ENCODE measurements at regions of chrX and their contacts with region 1.

Region 1: GRCh38 chrX:72276478-72276953 is 532 bp downstream of the RPS4X start:
- DNase-seq: peak in 1 of 5 donors; percentile 35
- H3K4me3 ChIP-seq: peak overlapping the region; percentile 70 to 82
- H3K4me3 Mint-ChIP-seq: peak overlapping the region; percentile 90 to 96 (median 94)
- H3K27ac ChIP-seq: peak overlapping the region; percentile 89
- H3K27ac Mint-ChIP-seq: peak overlapping the region; percentile 81 to 96 (median 87)
- H3K4me1 ChIP-seq: peaks cover 39% of the 10 kb centered on the region
- H3K4me1 Mint-ChIP-seq: peaks cover 23 to 44% (median 37%) of the 10 kb centered on the region in 4 donors
- H3K27me3 ChIP-seq: no peaks in the 10 kb centered on the region
- H3K27me3 Mint-ChIP-seq: no peaks in the 10 kb centered on the region

Region 2: DNA sequence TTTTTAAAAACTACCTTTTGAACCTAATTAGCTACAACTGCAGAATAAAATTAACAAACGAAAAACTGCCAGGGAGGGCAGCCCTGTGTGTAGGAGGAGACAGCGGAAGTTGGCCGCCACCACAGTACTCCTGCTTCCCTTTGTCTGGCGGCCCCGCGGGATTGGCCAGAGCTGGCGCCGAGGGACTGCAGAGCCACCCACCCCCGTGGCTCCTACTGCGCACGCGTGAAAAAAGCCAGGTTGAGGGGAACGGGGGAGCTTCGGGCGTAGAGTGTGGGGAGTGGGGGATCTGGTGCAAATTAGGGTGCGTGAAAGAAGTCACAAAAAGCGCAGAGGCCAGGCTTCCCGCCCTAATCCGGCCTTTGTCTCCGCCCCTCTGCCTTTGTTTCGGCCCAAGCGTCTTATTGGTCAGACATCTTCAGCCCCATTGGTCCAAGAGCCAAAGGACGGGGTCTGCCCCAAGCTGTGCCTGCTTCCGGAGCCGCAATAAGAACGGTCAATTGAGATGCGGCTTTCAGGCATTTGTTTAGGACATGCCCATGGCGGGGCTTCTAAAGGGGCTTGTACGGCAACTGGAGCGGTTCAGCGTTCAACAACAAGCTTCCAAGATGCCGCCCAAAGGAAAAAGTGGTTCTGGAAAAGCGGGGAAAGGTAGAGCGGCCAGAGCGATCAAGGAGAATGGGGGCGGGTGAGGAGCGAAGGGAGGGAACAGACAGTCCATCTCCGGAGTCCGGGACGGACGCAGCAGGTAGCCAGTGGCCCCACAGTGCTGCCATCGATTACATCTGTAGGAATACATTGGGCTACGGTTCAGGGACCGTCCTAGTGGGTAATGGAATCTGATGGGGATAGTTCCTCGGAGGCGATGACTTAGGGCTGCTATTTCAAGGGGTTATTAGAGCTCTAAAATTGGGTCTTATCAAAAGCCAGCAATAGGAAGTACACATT is 95.1 kb before region 1 on chrX and contains the start of gene PIN4:
- CTCF ChIA-PET with region 1: interaction called, 11 read pairs
- POLR2A ChIA-PET with region 1: interaction called, 28 read pairs
- intact Hi-C with region 1: loop called (anchors 2 kb)
- DNase-seq: peak; percentile 82 to 87 (median 84)
- H3K4me3 ChIP-seq: peak within 1 kb of the TSS; percentile 69
- H3K4me3 Mint-ChIP-seq: peak within 1 kb of the TSS in 1 of 8 donors; percentile 17
- H3K27ac ChIP-seq: peak within 1 kb of the TSS; percentile 68
- H3K27ac Mint-ChIP-seq: no peak within 1 kb of the TSS
- H3K4me1 ChIP-seq: peaks cover 24% of the 10 kb centered on the region
- H3K4me1 Mint-ChIP-seq: peaks cover 6 to 13% (median 8%) of the 10 kb centered on the region in 4 donors
- H3K27me3 ChIP-seq: no peaks in the 10 kb centered on the region
- H3K27me3 Mint-ChIP-seq: no peaks in the 10 kb centered on the region
- total RNA-seq, gene PIN4: 13.3 to 13.5 TPM

Region 3: GRCh38 chrX:72238721-72239475 is 37.6 kb before region 1 on chrX and contains the start of gene ERCC6L:
- CTCF ChIA-PET with region 1: interaction called, 48 read pairs
- POLR2A ChIA-PET with region 1: interaction called, 9 read pairs
- intact Hi-C with region 1: loop called (anchors 2 kb)
- DNase-seq: peak; percentile 80 to 85 (median 83)
- H3K4me3 ChIP-seq: peak within 1 kb of the TSS; percentile 46 to 52
- H3K4me3 Mint-ChIP-seq: peak within 1 kb of the TSS; percentile 67 to 84 (median 74)
- H3K27ac ChIP-seq: no peak within 1 kb of the TSS
- H3K27ac Mint-ChIP-seq: peak within 1 kb of the TSS; percentile 50 to 85 (median 60)
- H3K4me1 ChIP-seq: peaks cover 3% of the 10 kb centered on the region
- H3K4me1 Mint-ChIP-seq: peaks cover 0 to 7% (median 3%) of the 10 kb centered on the region in 4 donors
- H3K27me3 ChIP-seq: no peaks in the 10 kb centered on the region
- H3K27me3 Mint-ChIP-seq: no peaks in the 10 kb centered on the region
- total RNA-seq, gene ERCC6L: 0.15 to 0.28 TPM

Region 4: DNA sequence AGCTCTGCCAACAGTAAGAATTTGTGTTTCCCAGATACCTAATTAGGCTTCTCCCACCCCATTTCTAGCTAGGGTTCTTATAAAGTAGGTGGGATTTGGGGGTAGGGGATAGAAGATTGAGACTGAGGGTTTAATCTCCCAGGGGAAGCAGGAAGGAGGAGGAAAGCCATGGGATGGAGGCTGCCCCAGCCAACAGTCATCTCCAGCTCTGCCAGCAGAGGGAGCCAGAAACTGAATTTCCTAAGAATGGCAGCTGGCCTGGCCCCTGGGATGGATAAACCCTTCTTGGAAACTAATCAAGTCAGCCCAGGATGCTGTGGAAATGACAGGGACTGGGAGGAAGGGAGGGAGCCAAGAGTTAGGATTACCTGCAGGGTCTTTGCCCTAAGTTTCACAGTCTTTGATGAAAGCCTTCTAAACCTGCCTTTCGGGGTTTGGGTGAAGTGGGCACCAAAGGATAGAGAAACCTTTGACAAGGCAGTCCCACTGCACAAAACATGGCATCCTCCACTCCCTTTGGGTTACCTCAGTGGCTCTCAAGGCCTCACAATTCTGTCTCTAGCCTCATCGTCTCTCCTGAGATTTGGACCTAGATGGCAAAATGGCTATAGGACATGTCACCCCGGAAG is 30.9 kb before region 1 on chrX:
- CTCF ChIA-PET with region 1: interaction called, 48 read pairs
- POLR2A ChIA-PET with region 1: interaction called, 7 read pairs
- intact Hi-C with region 1: no loop called
- DNase-seq: peak in 4 of 5 donors; percentile 20 to 43 (median 28)
- H3K4me3 ChIP-seq: no peak overlapping the region
- H3K4me3 Mint-ChIP-seq: no peak overlapping the region
- H3K27ac ChIP-seq: no peak overlapping the region
- H3K27ac Mint-ChIP-seq: no peak overlapping the region
- H3K4me1 ChIP-seq: no peaks in the 10 kb centered on the region
- H3K4me1 Mint-ChIP-seq: no peaks in the 10 kb centered on the region
- H3K27me3 ChIP-seq: no peaks in the 10 kb centered on the region
- H3K27me3 Mint-ChIP-seq: no peaks in the 10 kb centered on the region

Region 5: GRCh38 chrX:72306851-72307645 is 30.5 kb after region 1 on chrX:
- CTCF ChIA-PET with region 1: no interaction called
- POLR2A ChIA-PET with region 1: interaction called, 8 read pairs
- intact Hi-C with region 1: loop called (anchors 2 kb)
- DNase-seq: peak in 4 of 5 donors; percentile 18 to 37 (median 36)
- H3K4me3 ChIP-seq: peak overlapping the region; percentile 6 to 40
- H3K4me3 Mint-ChIP-seq: peak overlapping the region; percentile 86 to 94 (median 90)
- H3K27ac ChIP-seq: no peak overlapping the region
- H3K27ac Mint-ChIP-seq: peak overlapping the region in 5 of 7 donors; percentile 27 to 80 (median 62)
- H3K4me1 ChIP-seq: peaks cover 24% of the 10 kb centered on the region
- H3K4me1 Mint-ChIP-seq: peaks cover 16 to 41% (median 24%) of the 10 kb centered on the region in 4 donors
- H3K27me3 ChIP-seq: peaks cover 5% of the 10 kb centered on the region
- H3K27me3 Mint-ChIP-seq: peaks cover 35 to 48% of the 10 kb centered on the region in 2 donors